GM12878 (cell line): ENCODE measurements at regions of chr5 and their contacts with region 1.

Region 1: GRCh38 chr5:164364237-164365208 is 859.1 kb downstream of the MAT2B start:
- DNase-seq: no peak
- ATAC-seq: no peak
- H3K4me3 ChIP-seq: no peak overlapping the region
- H3K27ac ChIP-seq: no peak overlapping the region
- H3K4me1 ChIP-seq: no peaks in the 10 kb centered on the region
- H3K27me3 ChIP-seq: no peaks in the 10 kb centered on the region
- CTCF ChIP-seq: no peak
- EP300 ChIP-seq: no peak
- POLR2A ChIP-seq: no peak
- RAD21 ChIP-seq: no peak

Region 2: DNA sequence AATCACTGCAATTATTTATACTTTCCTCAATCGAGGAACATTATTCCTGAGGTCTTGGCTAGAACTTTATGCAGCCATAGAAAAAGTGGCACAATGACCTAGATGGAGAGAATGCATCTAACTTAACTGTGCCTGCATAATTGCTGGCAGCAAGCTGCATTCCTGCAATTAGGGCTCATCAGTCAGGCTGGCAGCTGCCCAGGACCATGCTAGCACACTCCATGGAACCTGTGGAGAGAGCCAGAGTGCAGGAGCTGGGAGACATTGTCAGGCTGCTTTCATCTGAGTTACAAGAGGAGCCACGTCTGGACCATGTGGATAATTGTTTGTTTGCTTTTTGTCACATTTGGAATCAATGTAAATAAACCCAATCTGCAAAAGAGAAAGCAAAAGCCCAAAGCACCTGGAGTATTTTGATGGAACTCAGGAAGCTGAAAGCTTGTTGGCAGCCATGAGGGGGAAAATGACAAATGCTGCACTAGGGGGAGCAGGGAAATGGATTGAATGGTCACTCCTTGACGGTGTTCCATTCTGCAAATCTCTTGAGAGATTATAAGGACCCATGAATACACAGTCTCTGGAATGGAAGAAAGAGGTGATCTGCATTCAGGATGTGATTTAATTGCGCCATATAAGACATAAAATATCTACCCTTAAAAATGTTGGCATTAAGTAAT is 19.2 kb before region 1 on chr5:
- CTCF ChIA-PET with region 1: interaction called, 6 read pairs
- POLR2A ChIA-PET with region 1: interaction called, 19 read pairs
- RAD21 ChIA-PET with region 1: interaction called, 99 read pairs
- SMC1A ChIA-PET with region 1: interaction called, 128 read pairs
- in situ Hi-C with region 1: no loop called
- intact Hi-C with region 1: no loop called
- DNase-seq: no peak
- ATAC-seq: no peak
- H3K4me3 ChIP-seq: no peak overlapping the region
- H3K27ac ChIP-seq: no peak overlapping the region
- H3K4me1 ChIP-seq: no peaks in the 10 kb centered on the region
- H3K27me3 ChIP-seq: no peaks in the 10 kb centered on the region
- CTCF ChIP-seq: no peak
- EP300 ChIP-seq: no peak
- POLR2A ChIP-seq: no peak
- RAD21 ChIP-seq: no peak

Region 3: DNA sequence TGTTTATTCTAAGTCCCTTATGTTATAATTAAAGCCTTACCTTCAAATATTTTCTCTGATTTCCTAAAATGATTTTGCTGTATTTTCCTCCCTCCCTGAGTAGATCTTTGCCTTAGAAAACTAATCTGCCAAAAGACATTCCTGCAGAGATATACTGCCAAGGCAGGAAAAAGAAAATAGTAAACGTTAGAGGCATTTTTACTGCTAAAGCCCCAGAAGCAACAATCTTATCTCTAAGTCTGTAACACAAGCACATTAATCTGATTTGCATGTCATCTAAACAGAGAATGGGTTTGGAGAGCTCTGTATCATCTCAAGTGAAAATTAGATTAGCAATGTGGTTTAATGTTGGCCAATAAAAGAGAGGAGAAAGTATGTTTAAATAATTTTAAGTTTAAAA is 11.4 kb before region 1 on chr5:
- CTCF ChIA-PET with region 1: interaction called, 6 read pairs
- POLR2A ChIA-PET with region 1: interaction called, 8 read pairs
- RAD21 ChIA-PET with region 1: interaction called, 99 read pairs
- SMC1A ChIA-PET with region 1: interaction called, 128 read pairs
- in situ Hi-C with region 1: no loop called
- intact Hi-C with region 1: no loop called
- DNase-seq: no peak
- ATAC-seq: no peak
- H3K4me3 ChIP-seq: no peak overlapping the region
- H3K27ac ChIP-seq: no peak overlapping the region
- H3K4me1 ChIP-seq: no peaks in the 10 kb centered on the region
- H3K27me3 ChIP-seq: no peaks in the 10 kb centered on the region
- CTCF ChIP-seq: no peak
- EP300 ChIP-seq: no peak
- POLR2A ChIP-seq: no peak
- RAD21 ChIP-seq: no peak